Activated T-helper 1 cell treated with anti-CD3 and anti-CD28 coated beads, Interleukin-12 subunit alpha, Interleukin-12 subunit beta, Interleukin-2, Interleukin-4 antibody, amounts not matched to agents 30 ng/mL and 10 ng/mL and 1 ng/mL, durations not matched to agents 14 hours and 24 hours and 36 hours (primary cell): ENCODE measurements at regions of chr22 and their contacts with region 1.

Region 1: GRCh38 chr22:43884600-43885325 is 7.0 kb downstream of the PNPLA5 start:
- DNase-seq: peak; percentile 10
- H3K4me3 Mint-ChIP-seq: no peak overlapping the region
- H3K27ac Mint-ChIP-seq: no peak overlapping the region
- H3K4me1 Mint-ChIP-seq: no peaks in the 10 kb centered on the region
- H3K27me3 Mint-ChIP-seq: peaks cover 6% of the 10 kb centered on the region

Region 2: GRCh38 chr22:43945632-43946383 is 61.0 kb after region 1 on chr22:
- intact Hi-C with region 1: loop called (anchors 1 kb)
- DNase-seq: peak; percentile 61
- H3K4me3 Mint-ChIP-seq: no peak overlapping the region
- H3K27ac Mint-ChIP-seq: no peak overlapping the region
- H3K4me1 Mint-ChIP-seq: no peaks in the 10 kb centered on the region
- H3K27me3 Mint-ChIP-seq: peaks cover 3% of the 10 kb centered on the region

Region 3: GRCh38 chr22:43976861-43977795 is 92.4 kb after region 1 on chr22:
- intact Hi-C with region 1: no loop called
- DNase-seq: no peak
- H3K4me3 Mint-ChIP-seq: no peak overlapping the region
- H3K27ac Mint-ChIP-seq: no peak overlapping the region
- H3K4me1 Mint-ChIP-seq: no peaks in the 10 kb centered on the region
- H3K27me3 Mint-ChIP-seq: no peaks in the 10 kb centered on the region

Region 4: DNA sequence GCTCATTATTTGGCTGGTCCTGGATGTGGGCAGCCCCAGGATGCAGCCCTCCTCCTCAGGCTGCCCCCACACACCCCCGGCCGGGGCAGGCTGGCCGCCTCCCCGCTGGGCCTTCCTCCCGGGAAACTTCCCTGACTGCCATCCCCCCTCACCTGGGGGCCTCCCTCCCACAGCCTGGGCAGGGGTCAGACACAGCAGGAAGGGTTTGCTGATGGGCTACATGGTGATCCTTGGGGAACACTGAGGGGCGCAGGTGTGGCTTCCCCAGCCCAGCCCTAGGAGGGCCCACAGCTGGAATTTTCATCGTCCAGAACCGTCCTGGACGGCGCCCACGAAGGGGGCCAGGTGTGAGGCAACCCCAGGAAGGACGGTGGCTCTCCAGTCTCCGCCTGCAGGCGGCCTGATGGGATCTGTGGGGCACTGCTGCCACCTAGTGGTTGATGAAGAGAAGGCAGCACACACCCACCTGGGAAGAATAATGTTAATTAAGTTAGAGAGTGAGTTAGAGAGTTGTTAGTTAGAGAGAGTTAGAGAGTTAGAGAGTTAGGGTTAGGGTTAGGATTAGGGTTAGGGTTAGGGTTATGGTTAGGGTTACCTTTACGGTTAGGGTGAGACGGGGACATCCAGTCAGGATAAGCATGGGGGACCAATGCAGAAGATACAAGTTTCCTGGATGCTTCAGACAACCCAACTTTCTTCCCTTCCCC is 741.4 kb after region 1 on chr22:
- intact Hi-C with region 1: loop called (anchors 1 kb)
- DNase-seq: peak; percentile 70
- H3K4me3 Mint-ChIP-seq: no peak overlapping the region
- H3K27ac Mint-ChIP-seq: no peak overlapping the region
- H3K4me1 Mint-ChIP-seq: no peaks in the 10 kb centered on the region
- H3K27me3 Mint-ChIP-seq: peaks cover 7% of the 10 kb centered on the region